Left cardiac atrium (tissue), 4 donors: ENCODE measurements at regions of chr17 and their contacts with region 1.

Region 1: GRCh38 chr17:29148790-29149430 is 31.3 kb downstream of the MYO18A start:
- DNase-seq: peak; percentile 96
- ATAC-seq: peak; percentile 96 to 98

Region 2: DNA sequence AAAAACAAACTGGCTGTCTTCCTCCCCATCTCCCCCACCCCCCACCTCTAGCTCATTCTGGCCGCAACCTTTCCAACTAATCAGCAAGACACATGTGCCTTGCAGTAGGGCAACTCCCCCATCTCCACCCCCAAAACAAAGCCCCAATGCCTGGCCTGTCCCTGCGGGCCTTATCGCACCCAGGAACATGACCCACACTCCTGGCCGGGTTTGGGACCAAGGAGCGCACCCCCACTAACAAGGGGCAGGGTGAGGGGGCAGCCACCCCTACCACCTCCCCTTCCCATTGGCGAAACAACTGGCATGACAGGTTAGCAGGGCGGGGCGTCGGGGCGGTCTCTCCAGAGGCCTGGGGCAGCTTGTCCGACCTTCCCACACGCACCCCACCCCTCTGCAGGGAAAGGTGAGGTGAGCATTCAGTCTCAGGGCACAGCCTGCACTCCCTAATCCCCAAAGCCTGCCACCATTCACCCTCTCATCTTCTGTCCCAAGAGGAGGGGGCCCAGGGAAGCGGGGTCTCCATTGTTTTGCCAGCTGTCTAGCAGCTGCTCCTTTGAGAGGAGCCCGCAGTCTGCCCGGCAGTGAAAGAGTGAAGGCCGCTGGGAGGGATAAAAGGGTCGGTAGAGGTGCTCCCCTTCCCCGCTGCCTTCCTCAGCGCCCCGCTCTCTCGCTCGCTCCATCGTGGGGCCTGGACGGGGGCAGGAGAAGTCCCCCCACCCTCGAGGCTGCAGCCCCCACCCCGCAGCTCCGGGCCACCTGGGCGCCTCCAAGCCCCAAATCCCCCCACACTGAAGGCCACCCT is 30.5 kb after region 1 on chr17:
- intact Hi-C with region 1: loop called (anchors 2 kb)
- DNase-seq: peak; percentile 70
- ATAC-seq: peak; percentile 21 to 50

Region 3: GRCh38 chr17:29219378-29220047 is 70.6 kb after region 1 on chr17:
- intact Hi-C with region 1: loop called (anchors 1 to 10 kb)
- DNase-seq: peak; percentile 75
- ATAC-seq: peak; percentile 92 to 93

Region 4: GRCh38 chr17:29293890-29294579 is 145.1 kb after region 1 on chr17 and contains the start of gene NUFIP2:
- intact Hi-C with region 1: loop called in 1 of 2 experiments (anchors 5 kb)
- DNase-seq: peak; percentile 99
- ATAC-seq: peak; percentile 95 to 96
- total RNA-seq, gene NUFIP2: 31.8 to 48.3 TPM

Region 5: GRCh38 chr17:29347831-29348629 is 199.1 kb after region 1 on chr17:
- intact Hi-C with region 1: no loop called
- DNase-seq: no peak
- ATAC-seq: peak in 1 of 2 donors; percentile 61